ENCODE measurements at regions of chr7 and their contacts with region 1.

Region 1: DNA sequence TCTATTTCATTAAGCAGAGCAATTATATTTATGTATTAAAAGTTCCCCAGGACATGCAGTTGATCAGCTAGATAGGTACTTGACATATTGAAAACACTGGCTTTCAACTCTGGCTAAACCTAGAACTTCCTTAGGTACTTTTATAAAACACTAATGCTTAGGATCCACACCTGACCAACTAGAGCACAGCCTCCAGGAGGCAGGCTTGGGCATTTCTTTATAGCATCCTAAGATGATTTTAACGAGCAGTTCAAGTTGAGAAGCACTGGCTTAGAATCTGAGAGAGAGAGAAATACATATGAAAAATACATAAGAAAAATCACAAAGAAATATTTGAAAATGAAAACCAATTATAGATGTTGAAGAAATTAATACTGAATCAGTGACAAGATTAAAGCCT is 20.8 kb downstream of the SLC26A5 start:
- DNase-seq: no peak
- CTCF ChIP-seq: no peak

Region 2: GRCh38 chr7:103296901-103297836 is 128.0 kb before region 1 on chr7 and contains the start of gene PMPCB:
- in situ Hi-C with region 1: loop called (anchors 10 kb)
- DNase-seq: peak; percentile 89
- CTCF ChIP-seq: peak; percentile 95

Region 3: GRCh38 chr7:103919272-103919868 is 494.2 kb after region 1 on chr7:
- in situ Hi-C with region 1: no loop called
- DNase-seq: no peak
- CTCF ChIP-seq: no peak

Measured in GM13977 (cell line).